Activated CD8-positive, alpha-beta T cell treated with anti-CD3 and anti-CD28 coated beads for 36 hours (primary cell): ENCODE measurements at regions of chr4 and their contacts with region 1.

Region 1: DNA sequence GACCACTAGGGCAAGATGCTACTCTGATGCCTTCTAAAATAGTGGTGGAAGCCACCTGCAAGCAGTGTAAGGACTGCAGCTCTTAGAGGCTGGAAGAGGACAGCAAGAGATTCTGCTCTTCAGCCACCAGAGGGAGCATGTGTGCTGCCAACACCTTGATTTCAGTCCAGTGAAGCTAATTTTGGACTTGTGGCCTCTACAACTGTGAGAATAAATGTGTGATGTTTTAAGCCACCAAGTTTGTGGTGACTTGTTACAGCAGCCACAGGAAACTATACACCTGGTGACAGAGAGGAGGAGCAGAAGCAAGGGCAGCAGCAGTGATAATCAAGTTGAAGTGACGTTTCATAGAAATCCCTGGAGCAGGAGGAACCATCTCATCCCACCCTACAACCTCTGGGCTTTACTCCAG is 55.9 kb downstream of the FGFBP1 start:
- DNase-seq: peak; percentile 59
- ATAC-seq: peak; percentile 92
- H3K4me3 Mint-ChIP-seq: no peak overlapping the region
- H3K27ac Mint-ChIP-seq: no peak overlapping the region
- H3K4me1 Mint-ChIP-seq: peaks cover 1% of the 10 kb centered on the region
- H3K27me3 Mint-ChIP-seq: peaks cover 2% of the 10 kb centered on the region
- CTCF ChIP-seq: peak; percentile 98

Region 2: DNA sequence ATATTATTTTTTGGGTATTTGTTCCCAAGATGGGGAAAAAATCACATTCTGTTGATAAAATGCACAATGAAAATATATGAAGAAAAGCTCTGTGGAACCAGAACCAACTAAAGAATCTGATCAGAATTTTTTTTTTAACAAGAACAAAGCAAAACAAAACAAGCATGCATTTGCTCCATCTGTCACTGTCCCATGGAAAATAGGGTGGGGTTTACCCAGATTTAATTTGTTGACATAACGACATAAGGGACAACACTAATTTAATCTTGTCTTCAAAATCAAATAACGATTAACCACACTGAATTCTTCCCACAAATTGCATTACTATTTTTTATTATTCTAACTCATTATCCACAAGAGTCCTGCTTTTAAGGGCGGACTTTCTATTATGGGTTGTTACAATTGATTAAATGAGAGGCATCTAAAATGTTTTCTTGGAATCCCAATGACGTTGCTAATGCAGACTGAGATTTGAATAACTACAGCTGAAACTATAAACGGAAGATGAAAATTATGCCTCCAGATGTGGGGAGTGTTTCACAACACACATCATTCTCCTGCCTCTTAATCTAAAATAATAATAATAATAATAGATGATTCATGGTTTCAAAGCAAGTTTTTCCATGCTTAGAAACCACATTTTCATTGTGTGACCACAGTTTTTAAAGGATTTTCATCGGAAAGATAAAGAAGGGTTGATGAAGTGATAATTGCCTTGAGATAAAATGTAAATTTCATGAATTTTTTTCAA is 1187.4 kb before region 1 on chr4:
- CTCF ChIA-PET with region 1: no interaction called
- POLR2A ChIA-PET with region 1: no interaction called
- intact Hi-C with region 1: no loop called
- DNase-seq: no peak
- ATAC-seq: no peak
- H3K4me3 Mint-ChIP-seq: no peak overlapping the region
- H3K27ac Mint-ChIP-seq: no peak overlapping the region
- H3K4me1 Mint-ChIP-seq: no peaks in the 10 kb centered on the region
- H3K27me3 Mint-ChIP-seq: peaks cover 10% of the 10 kb centered on the region
- CTCF ChIP-seq: no peak

Region 3: GRCh38 chr4:15197005-15197404 is 685.7 kb before region 1 on chr4:
- CTCF ChIA-PET with region 1: no interaction called
- POLR2A ChIA-PET with region 1: no interaction called
- intact Hi-C with region 1: no loop called
- DNase-seq: no peak
- ATAC-seq: no peak
- H3K4me3 Mint-ChIP-seq: no peak overlapping the region
- H3K27ac Mint-ChIP-seq: no peak overlapping the region
- H3K4me1 Mint-ChIP-seq: no peaks in the 10 kb centered on the region
- H3K27me3 Mint-ChIP-seq: peaks cover 2% of the 10 kb centered on the region
- CTCF ChIP-seq: no peak

Region 4: GRCh38 chr4:15805583-15806517 is 76.8 kb before region 1 on chr4:
- CTCF ChIA-PET with region 1: interaction called, 115 read pairs
- POLR2A ChIA-PET with region 1: no interaction called
- intact Hi-C with region 1: loop called (anchors 5 kb)
- DNase-seq: peak; percentile 61
- ATAC-seq: peak; percentile 81
- H3K4me3 Mint-ChIP-seq: no peak overlapping the region
- H3K27ac Mint-ChIP-seq: no peak overlapping the region
- H3K4me1 Mint-ChIP-seq: peaks cover 19% of the 10 kb centered on the region
- H3K27me3 Mint-ChIP-seq: no peaks in the 10 kb centered on the region
- CTCF ChIP-seq: peak; percentile 78

Region 5: DNA sequence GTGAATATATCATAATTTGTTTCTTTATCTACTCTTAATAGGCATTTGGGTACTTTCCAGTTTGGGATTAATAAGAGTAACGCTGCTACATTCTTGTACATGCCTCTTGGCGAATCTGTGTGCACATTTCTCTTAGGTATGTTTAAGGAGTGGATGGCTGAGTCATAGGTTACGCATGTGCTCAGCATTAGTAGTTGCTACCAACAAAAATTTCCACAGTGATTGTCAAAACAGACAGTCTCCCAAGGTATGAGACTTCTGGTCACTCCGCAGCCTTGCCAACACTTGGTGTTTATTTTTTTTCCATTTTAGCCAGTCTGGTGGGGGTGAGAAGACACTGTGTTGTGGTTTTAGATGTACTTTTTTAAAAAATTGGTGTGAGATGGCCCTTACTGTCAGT is 11.3 kb after region 1 on chr4:
- CTCF ChIA-PET with region 1: interaction called, 23 read pairs
- POLR2A ChIA-PET with region 1: no interaction called
- intact Hi-C with region 1: no loop called
- DNase-seq: no peak
- ATAC-seq: no peak
- H3K4me3 Mint-ChIP-seq: no peak overlapping the region
- H3K27ac Mint-ChIP-seq: no peak overlapping the region
- H3K4me1 Mint-ChIP-seq: no peaks in the 10 kb centered on the region
- H3K27me3 Mint-ChIP-seq: peaks cover 7% of the 10 kb centered on the region
- CTCF ChIP-seq: no peak

Region 6: GRCh38 chr4:15930314-15930713 is 47.6 kb after region 1 on chr4:
- CTCF ChIA-PET with region 1: interaction called, 23 read pairs
- POLR2A ChIA-PET with region 1: no interaction called
- intact Hi-C with region 1: no loop called
- DNase-seq: peak; percentile 35
- ATAC-seq: peak; percentile 31
- H3K4me3 Mint-ChIP-seq: no peak overlapping the region
- H3K27ac Mint-ChIP-seq: peak overlapping the region; percentile 28
- H3K4me1 Mint-ChIP-seq: peaks cover 19% of the 10 kb centered on the region
- H3K27me3 Mint-ChIP-seq: peaks cover 16% of the 10 kb centered on the region
- CTCF ChIP-seq: no peak

Region 7: DNA sequence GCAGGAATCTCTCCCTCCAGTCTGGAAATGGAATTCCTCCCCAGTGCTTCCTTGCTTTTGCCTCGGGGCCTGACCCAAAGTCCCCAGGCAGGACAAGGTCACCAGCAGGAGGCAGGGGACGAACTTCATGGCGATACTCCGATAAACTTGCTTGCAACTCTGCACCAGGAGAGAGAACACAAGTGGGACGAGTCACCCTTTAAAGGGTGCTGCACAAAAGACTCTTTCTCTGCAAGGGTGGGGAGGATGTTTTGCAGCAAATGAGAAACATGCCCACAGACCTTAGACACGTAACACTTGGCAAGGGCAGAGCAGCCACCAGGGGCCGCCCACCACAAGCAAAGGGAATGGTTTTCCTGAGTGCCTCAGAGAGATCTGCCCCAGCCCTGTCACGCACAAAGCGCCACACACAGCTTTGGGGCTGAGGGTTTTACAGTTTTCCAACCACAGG is 80.3 kb after region 1 on chr4 and contains the start of gene FGFBP2:
- CTCF ChIA-PET with region 1: interaction called, 25 read pairs
- POLR2A ChIA-PET with region 1: no interaction called
- intact Hi-C with region 1: no loop called
- DNase-seq: peak; percentile 92
- ATAC-seq: peak; percentile 77
- H3K4me3 Mint-ChIP-seq: peak within 1 kb of the TSS; percentile 59
- H3K27ac Mint-ChIP-seq: peak within 1 kb of the TSS; percentile 86
- H3K4me1 Mint-ChIP-seq: peaks cover 42% of the 10 kb centered on the region
- H3K27me3 Mint-ChIP-seq: peaks cover 2% of the 10 kb centered on the region
- CTCF ChIP-seq: no peak
- total RNA-seq, gene FGFBP2: 6.3 to 8.2 TPM

Region 8: DNA sequence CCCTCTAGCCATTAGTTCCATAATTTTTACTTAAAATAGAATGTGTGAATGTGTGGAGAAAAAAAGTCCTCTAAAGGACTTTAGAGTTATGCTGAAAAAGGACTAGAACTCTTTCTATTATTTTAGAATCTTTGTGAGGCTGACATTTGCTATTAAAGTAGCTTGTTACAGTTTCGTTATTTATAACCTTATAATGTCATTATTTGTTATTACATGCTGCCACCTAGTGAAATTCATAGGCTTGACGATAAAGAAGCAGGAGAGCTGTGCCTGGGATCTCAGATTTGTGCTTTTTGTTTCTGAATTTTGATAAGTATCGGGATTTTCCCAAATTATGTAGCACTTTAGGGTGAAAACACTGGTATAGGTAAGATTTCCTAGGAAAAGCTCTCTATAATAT is 382.1 kb after region 1 on chr4:
- CTCF ChIA-PET with region 1: interaction called, 16 read pairs
- POLR2A ChIA-PET with region 1: no interaction called
- intact Hi-C with region 1: no loop called
- DNase-seq: peak; percentile 10
- ATAC-seq: peak; percentile 58
- H3K4me3 Mint-ChIP-seq: no peak overlapping the region
- H3K27ac Mint-ChIP-seq: no peak overlapping the region
- H3K4me1 Mint-ChIP-seq: peaks cover 22% of the 10 kb centered on the region
- H3K27me3 Mint-ChIP-seq: no peaks in the 10 kb centered on the region
- CTCF ChIP-seq: peak; percentile 58

Region 9: DNA sequence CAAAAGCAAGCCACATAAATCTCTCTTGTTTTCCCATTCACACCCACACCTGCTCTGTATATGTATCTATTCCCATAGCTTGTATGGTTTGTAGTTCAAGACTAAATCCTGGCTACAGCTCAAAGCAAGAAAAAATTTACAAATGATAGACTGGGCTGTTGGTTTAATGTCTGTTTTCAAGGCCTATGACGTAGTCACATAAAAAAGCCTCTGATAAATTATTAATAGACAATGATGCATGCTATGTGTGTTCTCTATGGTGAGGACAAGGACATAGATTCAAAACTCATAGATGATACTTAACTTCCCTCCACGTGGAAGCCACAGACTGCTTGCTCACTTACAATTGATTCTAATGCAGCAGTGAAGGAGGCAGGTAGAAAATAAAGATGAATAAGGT is 821.8 kb after region 1 on chr4:
- CTCF ChIA-PET with region 1: no interaction called
- POLR2A ChIA-PET with region 1: no interaction called
- intact Hi-C with region 1: no loop called
- DNase-seq: no peak
- ATAC-seq: no peak
- H3K4me3 Mint-ChIP-seq: no peak overlapping the region
- H3K27ac Mint-ChIP-seq: no peak overlapping the region
- H3K4me1 Mint-ChIP-seq: no peaks in the 10 kb centered on the region
- H3K27me3 Mint-ChIP-seq: peaks cover 8% of the 10 kb centered on the region
- CTCF ChIP-seq: no peak